Kidney (tissue), 22 donors: ENCODE measurements at regions of chr7 and their contacts with region 1.

Region 1: DNA sequence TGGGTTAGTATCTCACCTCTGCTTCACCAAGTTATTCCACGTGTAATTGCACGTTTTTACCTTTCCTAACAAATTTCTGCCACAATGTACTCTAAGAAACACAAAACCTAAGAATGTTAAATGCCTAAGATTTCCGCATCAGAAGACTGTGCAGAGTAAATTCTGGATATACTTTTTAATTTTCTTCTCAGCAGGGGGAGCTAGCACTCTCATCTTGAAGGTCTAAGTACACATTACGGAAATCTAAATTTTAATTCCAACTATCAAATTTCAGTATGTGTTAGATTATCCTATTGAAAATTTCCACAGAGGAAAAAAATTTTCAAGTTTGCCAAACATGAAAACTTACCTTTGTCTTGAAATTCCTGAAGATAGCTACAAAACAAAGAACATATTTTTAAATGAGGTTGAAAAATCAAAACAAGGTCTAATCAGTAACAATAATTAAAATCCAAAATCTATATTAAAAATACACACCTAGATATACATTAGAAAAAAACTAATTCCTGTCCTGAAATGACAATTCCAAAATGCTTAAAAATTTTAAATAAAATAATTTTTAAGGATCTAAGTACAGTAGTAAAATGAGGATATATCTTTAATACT is 10.5 kb downstream of the SKAP2 start:
- DNase-seq: peak in 2 of 5 donors; percentile 85 to 92
- H3K4me3 ChIP-seq: no peak overlapping the region
- H3K27ac ChIP-seq: no peak overlapping the region
- H3K4me1 ChIP-seq: peaks cover 0 to 15% (median 0%) of the 10 kb centered on the region in 3 donors
- H3K27me3 ChIP-seq: peaks cover 2% of the 10 kb centered on the region
- CTCF ChIP-seq: peak; percentile 60

Region 2: GRCh38 chr7:26182706-26183105 is 671.2 kb before region 1 on chr7:
- intact Hi-C with region 1: no loop called
- DNase-seq: no peak
- H3K4me3 ChIP-seq: no peak overlapping the region
- H3K27ac ChIP-seq: no peak overlapping the region
- H3K4me1 ChIP-seq: no peaks in the 10 kb centered on the region
- H3K27me3 ChIP-seq: no peaks in the 10 kb centered on the region
- CTCF ChIP-seq: no peak

Region 3: DNA sequence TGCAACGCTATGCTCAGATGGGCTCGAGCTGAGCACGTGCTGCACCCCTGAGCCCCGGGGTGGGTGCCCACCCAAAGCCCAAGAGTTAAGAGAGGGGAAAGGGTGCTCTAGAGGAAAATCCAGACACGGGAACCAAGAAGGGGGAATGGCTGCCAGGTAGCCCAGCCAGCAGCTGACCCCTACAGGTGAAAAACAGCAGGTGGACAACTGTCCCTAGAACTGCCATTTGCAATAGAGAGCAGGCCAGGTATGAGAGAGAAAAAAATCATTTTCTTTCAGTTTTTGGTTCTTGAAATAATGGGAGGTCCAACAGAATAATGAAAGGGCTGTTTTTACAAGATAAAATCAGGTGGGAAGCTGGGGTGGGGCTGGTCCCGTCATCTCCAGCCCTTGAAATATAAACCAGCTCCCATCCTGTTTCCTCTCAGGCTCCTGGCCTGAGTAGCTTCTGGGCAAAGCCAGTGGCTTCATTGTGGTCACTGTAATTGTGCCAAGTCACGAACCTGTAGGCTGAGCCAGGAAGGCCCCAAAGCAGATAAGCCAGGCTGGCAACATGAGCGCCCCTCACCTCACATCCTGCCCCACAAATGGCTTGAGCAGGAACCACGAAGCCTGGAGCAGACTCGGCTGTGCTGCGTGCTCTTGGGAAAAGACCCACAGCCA is 304.5 kb before region 1 on chr7:
- intact Hi-C with region 1: no loop called
- DNase-seq: no peak
- H3K4me3 ChIP-seq: no peak overlapping the region
- H3K27ac ChIP-seq: no peak overlapping the region
- H3K4me1 ChIP-seq: peaks cover 0 to 2% (median 0%) of the 10 kb centered on the region in 3 donors
- H3K27me3 ChIP-seq: no peaks in the 10 kb centered on the region
- CTCF ChIP-seq: no peak

Region 4: DNA sequence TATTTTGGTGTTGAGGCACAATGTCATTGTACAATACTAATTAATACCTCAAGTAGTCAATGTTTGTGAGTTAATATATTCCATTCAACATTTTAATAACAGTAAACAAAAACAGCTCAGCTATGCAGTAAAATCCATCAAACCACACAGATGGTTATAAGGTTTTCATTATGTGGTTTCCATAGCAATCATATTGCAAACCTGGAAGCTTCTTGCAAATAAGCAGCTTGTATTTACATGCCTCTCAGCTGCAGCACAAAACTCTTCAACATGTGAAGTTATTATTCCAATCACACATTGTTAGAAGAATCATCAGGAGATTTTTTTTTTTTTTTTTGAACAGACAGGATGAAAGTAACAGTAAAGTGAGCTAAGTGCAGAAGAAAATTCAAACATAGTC is 159.8 kb before region 1 on chr7:
- intact Hi-C with region 1: loop called (anchors 10 kb)
- DNase-seq: no peak
- H3K4me3 ChIP-seq: no peak overlapping the region
- H3K27ac ChIP-seq: no peak overlapping the region
- H3K4me1 ChIP-seq: peaks cover 0 to under 1% (median under 1%) of the 10 kb centered on the region in 3 donors
- H3K27me3 ChIP-seq: no peaks in the 10 kb centered on the region
- CTCF ChIP-seq: no peak

Region 5: DNA sequence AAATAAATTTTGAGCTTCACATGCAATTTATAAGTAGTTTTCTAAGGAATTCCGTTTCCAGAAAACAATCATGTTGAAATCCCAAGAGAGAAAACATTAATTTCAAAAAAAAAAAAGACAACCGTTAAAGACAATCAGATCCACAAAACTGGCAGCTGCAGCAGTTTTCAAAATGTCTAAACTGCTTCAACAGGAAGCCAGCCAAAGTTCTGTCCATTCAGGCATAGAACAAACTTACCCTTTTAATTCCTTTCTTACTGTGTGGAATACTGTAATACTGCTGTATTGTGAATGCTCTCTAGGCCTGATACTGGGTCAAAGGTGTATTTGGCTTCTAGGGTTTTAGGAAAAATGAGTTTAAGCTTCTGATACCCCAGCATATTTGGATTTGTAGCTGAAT is 210.3 kb after region 1 on chr7:
- intact Hi-C with region 1: no loop called
- DNase-seq: peak in 2 of 5 donors; percentile 69 to 79
- H3K4me3 ChIP-seq: no peak overlapping the region
- H3K27ac ChIP-seq: no peak overlapping the region
- H3K4me1 ChIP-seq: peaks cover 0 to 5% (median 4%) of the 10 kb centered on the region in 3 donors
- H3K27me3 ChIP-seq: no peaks in the 10 kb centered on the region
- CTCF ChIP-seq: no peak